ENCODE measurements at regions of chr10 and their contacts with region 1.

Region 1: GRCh38 chr10:64813391-64813790 is 1292.2 kb downstream of the REEP3 start:
- DNase-seq: no peak
- H3K4me3 ChIP-seq: no peak overlapping the region
- H3K27ac ChIP-seq: no peak overlapping the region
- H3K4me1 ChIP-seq: no peaks in the 10 kb centered on the region
- H3K27me3 ChIP-seq: no peaks in the 10 kb centered on the region
- CTCF ChIP-seq: no peak
- EP300 ChIP-seq: no peak
- POLR2A ChIP-seq: no peak

Region 2: GRCh38 chr10:64648915-64649314 is 164.5 kb before region 1 on chr10:
- intact Hi-C with region 1: loop called in 1 of 4 experiments (anchors 10 kb)
- DNase-seq: no peak
- H3K4me3 ChIP-seq: no peak overlapping the region
- H3K27ac ChIP-seq: no peak overlapping the region
- H3K4me1 ChIP-seq: peaks cover 4% of the 10 kb centered on the region
- H3K27me3 ChIP-seq: no peaks in the 10 kb centered on the region
- CTCF ChIP-seq: no peak
- EP300 ChIP-seq: no peak
- POLR2A ChIP-seq: no peak

Region 3: DNA sequence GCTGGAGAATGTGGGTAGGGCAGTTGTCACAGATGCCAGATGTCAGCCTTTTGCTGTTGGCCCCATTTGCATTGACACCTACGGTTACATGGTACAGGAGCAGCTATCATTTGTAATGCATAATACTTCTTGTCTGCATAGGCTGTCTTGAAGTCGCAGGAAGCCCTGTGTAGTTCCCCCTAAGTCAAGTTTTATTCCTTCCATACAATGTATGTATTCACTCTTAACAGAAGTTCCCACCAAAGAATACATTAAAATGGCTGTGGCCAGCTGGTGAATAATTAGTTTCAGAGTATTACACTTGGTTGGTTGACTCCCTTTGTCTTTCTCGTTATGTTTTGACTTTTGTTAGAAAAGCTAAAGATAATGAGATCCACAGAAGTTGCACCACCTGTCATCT is 123.2 kb before region 1 on chr10:
- intact Hi-C with region 1: no loop called
- DNase-seq: no peak
- H3K4me3 ChIP-seq: no peak overlapping the region
- H3K27ac ChIP-seq: no peak overlapping the region
- H3K4me1 ChIP-seq: no peaks in the 10 kb centered on the region
- H3K27me3 ChIP-seq: no peaks in the 10 kb centered on the region
- CTCF ChIP-seq: no peak
- EP300 ChIP-seq: no peak
- POLR2A ChIP-seq: no peak

Region 4: DNA sequence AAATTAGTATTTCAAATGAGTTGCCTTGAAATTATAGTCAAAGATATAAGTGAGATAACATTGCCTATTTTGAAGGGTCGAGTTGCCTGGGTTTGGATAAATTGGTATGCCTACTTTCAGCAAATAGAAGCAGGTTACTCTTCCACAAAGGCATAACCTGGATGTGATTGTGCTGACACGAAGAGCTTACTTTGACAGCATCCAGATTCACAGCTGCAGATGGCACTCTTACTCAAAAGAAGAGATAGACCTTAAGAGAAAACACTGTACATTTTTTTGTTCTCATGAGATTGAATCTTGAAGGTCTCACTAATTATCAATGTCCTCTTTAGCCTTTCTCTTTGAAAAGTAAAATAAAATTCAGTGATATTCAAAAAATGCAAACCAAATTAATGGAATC is 46.5 kb after region 1 on chr10:
- intact Hi-C with region 1: no loop called
- DNase-seq: no peak
- H3K4me3 ChIP-seq: no peak overlapping the region
- H3K27ac ChIP-seq: no peak overlapping the region
- H3K4me1 ChIP-seq: no peaks in the 10 kb centered on the region
- H3K27me3 ChIP-seq: no peaks in the 10 kb centered on the region
- CTCF ChIP-seq: no peak
- EP300 ChIP-seq: no peak
- POLR2A ChIP-seq: no peak

Measured in ovary (tissue), 10 donors.